Activated CD8-positive, alpha-beta T cell treated with anti-CD3 and anti-CD28 coated beads, Interleukin-2, amount 10 ng/mL, durations not matched to agents 7 days and 5 days (primary cell): ENCODE measurements at regions of chr2 and their contacts with region 1.

Region 1: GRCh38 chr2:88669371-88670214 is 21.9 kb upstream of the RPIA start:
- DNase-seq: peak; percentile 58
- ATAC-seq: peak; percentile 87
- H3K4me3 Mint-ChIP-seq: no peak overlapping the region
- H3K27ac Mint-ChIP-seq: no peak overlapping the region
- H3K4me1 Mint-ChIP-seq: peaks cover 3% of the 10 kb centered on the region
- H3K27me3 Mint-ChIP-seq: peaks cover 6% of the 10 kb centered on the region

Region 2: GRCh38 chr2:88590998-88591613 is 78.5 kb before region 1 on chr2:
- CTCF ChIA-PET with region 1: interaction called, 212 read pairs
- POLR2A ChIA-PET with region 1: no interaction called
- DNase-seq: peak; percentile 65
- ATAC-seq: peak; percentile 79
- H3K4me3 Mint-ChIP-seq: no peak overlapping the region
- H3K27ac Mint-ChIP-seq: peak overlapping the region; percentile 57
- H3K4me1 Mint-ChIP-seq: peaks cover 4% of the 10 kb centered on the region
- H3K27me3 Mint-ChIP-seq: no peaks in the 10 kb centered on the region

Region 3: GRCh38 chr2:88600038-88600465 is 69.5 kb before region 1 on chr2:
- CTCF ChIA-PET with region 1: interaction called, 212 read pairs
- POLR2A ChIA-PET with region 1: no interaction called
- DNase-seq: peak; percentile 60
- ATAC-seq: peak; percentile 100
- H3K4me3 Mint-ChIP-seq: no peak overlapping the region
- H3K27ac Mint-ChIP-seq: no peak overlapping the region
- H3K4me1 Mint-ChIP-seq: peaks cover 18% of the 10 kb centered on the region
- H3K27me3 Mint-ChIP-seq: no peaks in the 10 kb centered on the region

Region 4: GRCh38 chr2:88638743-88639142 is 30.9 kb before region 1 on chr2:
- CTCF ChIA-PET with region 1: interaction called, 11 read pairs
- POLR2A ChIA-PET with region 1: no interaction called
- DNase-seq: peak; percentile 62
- ATAC-seq: peak; percentile 62
- H3K4me3 Mint-ChIP-seq: peak overlapping the region; percentile 18
- H3K27ac Mint-ChIP-seq: peak overlapping the region; percentile 50
- H3K4me1 Mint-ChIP-seq: peaks cover 53% of the 10 kb centered on the region
- H3K27me3 Mint-ChIP-seq: peaks cover 7% of the 10 kb centered on the region

Region 5: DNA sequence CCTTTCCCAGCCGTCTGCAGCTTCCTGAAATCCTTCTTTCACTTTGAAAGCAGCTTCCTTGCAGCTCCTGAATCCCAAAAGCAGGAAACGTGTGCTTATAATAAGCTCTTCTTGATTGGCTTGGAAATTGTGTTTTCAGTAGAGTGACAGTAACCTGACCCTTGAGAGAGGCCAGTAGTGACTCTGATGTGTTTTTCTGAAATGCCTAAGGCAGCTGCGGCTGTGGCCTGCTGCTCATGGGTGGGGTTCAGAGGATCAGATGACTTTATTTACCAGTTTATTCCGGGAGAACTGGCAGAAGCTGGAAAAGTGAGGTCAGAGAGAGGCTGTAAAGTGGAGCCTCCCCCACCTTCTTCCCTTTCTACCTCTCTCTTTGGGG is 10.1 kb before region 1 on chr2:
- CTCF ChIA-PET with region 1: interaction called, 40 read pairs
- POLR2A ChIA-PET with region 1: no interaction called
- DNase-seq: no peak
- ATAC-seq: no peak
- H3K4me3 Mint-ChIP-seq: no peak overlapping the region
- H3K27ac Mint-ChIP-seq: no peak overlapping the region
- H3K4me1 Mint-ChIP-seq: no peaks in the 10 kb centered on the region
- H3K27me3 Mint-ChIP-seq: peaks cover 2% of the 10 kb centered on the region

Region 6: DNA sequence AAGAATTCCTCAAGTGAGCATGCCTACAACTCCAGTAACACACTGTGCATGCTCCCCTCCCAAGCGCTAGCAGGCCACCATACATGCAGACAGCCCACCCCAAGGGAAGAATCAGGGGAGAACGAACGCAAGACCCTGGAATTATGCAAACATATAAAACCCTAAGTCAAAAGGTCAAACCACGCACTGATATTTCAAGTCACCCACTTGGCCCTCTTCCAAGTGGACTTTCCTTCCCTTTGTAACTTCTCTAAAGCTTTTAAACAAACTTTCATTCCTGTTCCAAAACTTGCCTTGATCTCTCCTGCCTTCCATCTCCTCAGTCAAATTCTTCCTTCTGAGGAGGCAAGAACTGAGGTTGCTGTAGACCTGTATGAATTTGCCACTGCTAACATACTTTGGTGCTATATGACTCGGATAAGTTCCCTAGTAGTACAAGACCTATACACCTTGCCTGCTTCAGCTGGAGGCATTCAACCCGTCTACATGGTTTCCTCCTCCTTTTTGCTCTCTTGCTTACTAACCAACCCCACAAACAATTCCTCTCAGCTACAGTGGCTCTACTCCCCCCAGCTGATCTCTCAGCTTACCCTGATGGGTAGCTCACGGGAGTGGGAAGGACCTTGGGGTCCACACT is 10.8 kb after region 1 on chr2:
- CTCF ChIA-PET with region 1: interaction called, 16 read pairs
- POLR2A ChIA-PET with region 1: no interaction called
- DNase-seq: no peak
- ATAC-seq: no peak
- H3K4me3 Mint-ChIP-seq: no peak overlapping the region
- H3K27ac Mint-ChIP-seq: no peak overlapping the region
- H3K4me1 Mint-ChIP-seq: no peaks in the 10 kb centered on the region
- H3K27me3 Mint-ChIP-seq: peaks cover 19% of the 10 kb centered on the region

Region 7: DNA sequence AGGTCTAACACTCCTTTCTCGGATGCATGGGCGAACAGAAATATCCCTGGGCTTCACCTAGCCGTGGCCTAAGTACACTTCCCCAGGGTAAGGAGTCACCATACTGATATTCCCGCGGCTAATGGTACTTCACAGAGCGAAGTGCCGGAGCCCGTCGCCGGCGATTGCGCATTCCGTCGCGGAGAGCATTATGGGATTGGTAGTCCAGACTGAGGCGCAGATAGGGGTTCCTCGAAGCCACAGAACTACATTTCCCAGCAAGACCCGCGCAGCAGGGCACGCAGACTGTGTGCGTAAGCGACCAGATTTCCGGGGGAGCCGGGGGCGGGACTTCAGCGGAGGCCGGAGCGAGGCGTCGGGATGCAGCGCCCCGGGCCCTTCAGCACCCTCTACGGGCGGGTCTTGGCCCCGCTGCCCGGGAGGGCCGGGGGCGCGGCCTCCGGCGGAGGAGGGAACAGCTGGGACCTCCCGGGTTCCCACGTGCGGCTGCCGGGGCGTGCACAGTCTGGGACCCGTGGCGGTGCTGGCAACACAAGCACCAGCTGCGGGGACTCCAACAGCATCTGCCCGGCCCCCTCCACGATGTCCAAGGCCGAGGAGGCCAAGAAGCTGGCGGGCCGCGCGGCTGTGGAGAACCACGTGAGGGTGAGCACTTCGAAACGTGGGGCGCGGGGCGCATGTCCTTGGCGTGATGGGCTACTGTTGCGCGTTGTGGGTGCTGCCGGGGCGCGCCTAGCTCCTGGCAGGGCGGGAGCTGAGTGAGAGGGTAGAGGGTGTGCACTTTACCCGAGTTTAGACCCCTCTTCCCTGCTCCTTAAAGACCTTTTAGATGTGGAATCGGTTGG is 22.0 kb after region 1 on chr2 and contains the start of gene RPIA:
- CTCF ChIA-PET with region 1: interaction called, 17 read pairs
- POLR2A ChIA-PET with region 1: no interaction called
- DNase-seq: peak; percentile 99
- ATAC-seq: peak; percentile 95
- H3K4me3 Mint-ChIP-seq: peak within 1 kb of the TSS; percentile 93
- H3K27ac Mint-ChIP-seq: peak within 1 kb of the TSS; percentile 95
- H3K4me1 Mint-ChIP-seq: peaks cover 42% of the 10 kb centered on the region
- H3K27me3 Mint-ChIP-seq: no peaks in the 10 kb centered on the region
- total RNA-seq, gene RPIA: 47.8 to 51.8 TPM